ENCODE measurements at regions of chr15 and their contacts with region 1.

Region 1: DNA sequence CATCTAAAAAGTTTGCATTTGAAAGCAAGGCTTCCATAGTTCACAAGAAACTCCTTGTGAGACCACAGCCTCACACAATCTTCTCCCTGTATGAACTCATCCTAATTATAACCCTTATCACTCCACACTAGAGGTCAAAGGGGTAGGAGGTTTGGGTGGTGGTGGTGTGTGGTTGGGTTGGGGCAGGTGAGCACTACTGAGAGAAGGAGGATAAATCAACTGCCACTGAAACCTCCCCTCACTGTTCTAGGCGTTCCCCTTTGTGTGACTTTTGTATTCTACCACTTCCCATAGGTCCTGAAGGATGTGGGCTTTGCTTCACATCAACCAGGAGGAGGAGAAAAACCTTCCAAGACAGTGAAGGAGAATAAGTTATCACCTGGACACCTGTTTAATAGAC is 6.4 kb upstream of the AGBL1 start:
- DNase-seq: no peak
- H3K4me3 ChIP-seq: no peak overlapping the region
- H3K27ac ChIP-seq: no peak overlapping the region
- H3K4me1 ChIP-seq: no peaks in the 10 kb centered on the region
- H3K27me3 ChIP-seq: peaks cover 4% of the 10 kb centered on the region
- CTCF ChIP-seq: no peak
- EP300 ChIP-seq: no peak
- POLR2A ChIP-seq: no peak

Region 2: GRCh38 chr15:87648278-87648677 is 1575.0 kb after region 1 on chr15:
- in situ Hi-C with region 1: no loop called
- intact Hi-C with region 1: loop called (anchors 5 kb)
- DNase-seq: no peak
- H3K4me3 ChIP-seq: no peak overlapping the region
- H3K27ac ChIP-seq: no peak overlapping the region
- H3K4me1 ChIP-seq: no peaks in the 10 kb centered on the region
- H3K27me3 ChIP-seq: no peaks in the 10 kb centered on the region
- CTCF ChIP-seq: no peak
- EP300 ChIP-seq: no peak
- POLR2A ChIP-seq: no peak